ENCODE measurements at regions of chr5 and their contacts with region 1.

Region 1: DNA sequence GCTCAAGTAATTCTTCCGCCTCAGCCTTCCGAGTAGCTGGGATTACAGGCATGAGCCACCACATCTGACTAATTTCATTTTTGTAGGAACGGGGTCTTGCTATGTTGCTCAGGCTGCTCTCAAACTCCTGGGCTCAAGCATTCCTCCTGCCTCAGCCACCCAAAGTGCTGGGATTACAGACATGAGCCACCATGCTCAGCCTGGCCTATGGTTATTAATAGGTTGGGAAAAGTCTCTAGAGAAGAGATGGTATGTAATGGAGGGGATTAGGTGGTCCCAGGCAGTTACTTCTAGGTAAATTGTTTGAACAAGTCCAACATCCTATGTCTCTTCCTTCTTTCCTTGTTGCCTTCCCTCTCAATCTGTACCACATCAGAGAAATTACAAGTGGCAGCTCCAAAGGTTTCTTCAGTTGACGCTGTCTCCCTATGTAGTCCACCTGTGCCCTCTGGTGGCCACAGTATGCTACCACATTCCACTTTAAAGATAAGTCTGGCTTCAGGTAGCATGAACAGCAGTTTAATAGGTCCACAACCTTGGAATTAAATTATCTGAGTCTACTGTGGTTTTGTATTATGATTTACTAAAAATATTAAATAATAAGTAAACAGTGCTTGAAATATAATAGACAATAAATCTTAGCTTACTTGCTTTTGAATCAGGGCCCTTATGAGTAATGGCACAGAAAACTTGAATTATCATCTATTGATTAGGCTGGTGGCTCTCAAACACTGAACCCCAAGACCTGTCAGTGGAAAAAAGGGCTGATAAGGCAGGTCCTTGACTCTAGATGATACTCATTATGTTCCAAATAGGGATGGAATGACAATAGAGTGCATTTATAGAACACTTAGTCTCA is 9.7 kb downstream of the TIGD6 start:
- DNase-seq: peak; percentile 46 to 76 (median 49)
- H3K4me3 ChIP-seq: no peak overlapping the region
- H3K4me3 Mint-ChIP-seq: no peak overlapping the region
- H3K27ac ChIP-seq: no peak overlapping the region
- H3K27ac Mint-ChIP-seq: no peak overlapping the region
- H3K4me1 ChIP-seq: no peaks in the 10 kb centered on the region
- H3K4me1 Mint-ChIP-seq: no peaks in the 10 kb centered on the region
- H3K27me3 ChIP-seq: no peaks in the 10 kb centered on the region
- H3K27me3 Mint-ChIP-seq: no peaks in the 10 kb centered on the region

Region 2: DNA sequence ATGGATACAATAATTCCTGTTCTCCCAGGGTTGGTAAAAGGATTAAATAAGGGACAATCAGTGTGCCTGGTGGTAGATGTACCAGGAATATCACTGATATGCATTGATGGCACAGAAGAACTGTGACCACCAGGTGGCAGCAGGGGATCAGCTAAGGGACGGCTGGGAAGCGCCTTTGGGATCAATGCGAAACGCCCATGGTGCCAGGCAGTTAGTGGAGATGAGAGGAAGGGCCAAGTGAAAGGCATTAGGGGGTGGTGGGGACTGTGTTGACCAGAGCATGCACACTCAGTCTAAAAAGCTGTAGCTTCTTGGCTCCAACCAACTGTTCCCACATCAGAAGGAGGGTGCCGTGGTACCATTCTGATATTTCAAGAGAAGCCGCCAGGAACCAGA is 353.9 kb before region 1 on chr5:
- CTCF ChIA-PET with region 1: interaction called, 12 read pairs
- POLR2A ChIA-PET with region 1: interaction called, 3 read pairs
- DNase-seq: peak in 4 of 5 donors; percentile 47 to 71 (median 51)
- H3K4me3 ChIP-seq: no peak overlapping the region
- H3K4me3 Mint-ChIP-seq: no peak overlapping the region
- H3K27ac ChIP-seq: no peak overlapping the region
- H3K27ac Mint-ChIP-seq: no peak overlapping the region
- H3K4me1 ChIP-seq: no peaks in the 10 kb centered on the region
- H3K4me1 Mint-ChIP-seq: peaks cover 0 to 3% (median 0%) of the 10 kb centered on the region in 3 donors
- H3K27me3 ChIP-seq: no peaks in the 10 kb centered on the region
- H3K27me3 Mint-ChIP-seq: peaks cover 0 to 2% of the 10 kb centered on the region in 2 donors

Measured in CD8-positive, alpha-beta memory T cell (primary cell).